Heart right ventricle (tissue), 16 donors: ENCODE measurements at regions of chr4 and their contacts with region 1.

Region 1: GRCh38 chr4:123744664-123745290 is 348.2 kb downstream of the SPRY1 start:
- DNase-seq: no peak
- ATAC-seq: peak in 6 of 8 donors; percentile 32 to 72 (median 64)
- H3K4me3 ChIP-seq: no peak overlapping the region
- H3K27ac ChIP-seq: peak overlapping the region; percentile 7 to 73 (median 55)
- H3K4me1 ChIP-seq: peaks cover 8 to 52% (median 25%) of the 10 kb centered on the region in 9 donors
- H3K27me3 ChIP-seq: no peaks in the 10 kb centered on the region
- CTCF ChIP-seq: no peak

Region 2: DNA sequence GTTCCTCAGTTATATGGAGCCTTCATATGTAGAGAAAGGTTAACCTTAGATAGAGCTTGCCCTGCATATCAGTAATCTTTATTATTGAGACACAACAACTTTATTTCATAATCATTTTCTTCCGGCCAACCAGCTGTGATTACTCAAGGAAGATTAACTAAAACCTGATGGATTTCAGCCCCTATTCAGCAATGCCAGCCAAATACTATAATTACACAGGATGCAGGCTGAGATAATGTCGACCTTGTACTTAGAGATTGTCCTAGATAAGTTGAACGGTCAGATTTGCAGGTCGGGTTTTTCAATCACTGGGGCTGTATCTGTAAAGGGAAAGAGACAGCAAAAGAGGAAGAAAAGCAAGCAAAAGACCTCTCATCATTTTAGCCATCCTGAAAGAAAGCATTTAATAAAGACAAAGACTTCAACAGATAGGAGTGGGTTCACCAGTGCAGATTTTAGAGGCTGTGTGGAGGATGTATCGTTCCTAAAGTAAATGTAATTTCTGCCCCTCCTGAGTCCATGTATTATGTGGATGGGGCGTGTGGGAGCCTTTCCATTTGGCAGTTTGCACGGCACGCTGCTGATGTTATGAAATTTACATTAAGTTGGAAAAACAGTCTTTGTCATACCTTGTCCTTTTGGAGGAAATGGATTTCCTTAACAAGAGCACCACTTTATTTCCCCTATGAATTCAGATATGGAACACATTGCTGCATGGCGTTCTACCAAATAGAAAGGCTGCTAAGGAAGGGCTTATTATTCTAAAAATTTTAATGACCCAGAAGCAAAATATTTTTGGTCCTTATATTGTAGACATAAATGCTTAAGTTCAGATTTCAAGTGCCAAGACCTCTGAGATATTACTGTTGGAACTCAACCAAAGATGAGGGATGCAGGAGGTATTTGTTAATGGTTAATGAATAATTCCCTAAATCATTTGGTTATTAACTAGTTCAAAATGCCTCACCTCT is 148.5 kb after region 1 on chr4:
- intact Hi-C with region 1: loop called in 1 of 10 experiments (anchors 5 kb)
- DNase-seq: no peak
- ATAC-seq: peak in 7 of 8 donors; percentile 35 to 70 (median 61)
- H3K4me3 ChIP-seq: peak overlapping the region in 1 of 10 donors; percentile 5
- H3K27ac ChIP-seq: peak overlapping the region; percentile 45 to 80 (median 62)
- H3K4me1 ChIP-seq: peaks cover 3 to 48% (median 31%) of the 10 kb centered on the region in 9 donors
- H3K27me3 ChIP-seq: no peaks in the 10 kb centered on the region
- CTCF ChIP-seq: no peak

Region 3: GRCh38 chr4:123976285-123976684 is 231.5 kb after region 1 on chr4:
- intact Hi-C with region 1: loop called in 2 of 10 experiments (anchors 5 to 10 kb)
- DNase-seq: no peak
- ATAC-seq: peak in 6 of 8 donors; percentile 23 to 69 (median 64)
- H3K4me3 ChIP-seq: no peak overlapping the region
- H3K27ac ChIP-seq: peak overlapping the region in 9 of 10 donors; percentile 12 to 61 (median 27)
- H3K4me1 ChIP-seq: peaks cover 0 to 31% (median 10%) of the 10 kb centered on the region in 9 donors
- H3K27me3 ChIP-seq: no peaks in the 10 kb centered on the region
- CTCF ChIP-seq: no peak